ENCODE measurements at regions of chr2 and their contacts with region 1.

Region 1: DNA sequence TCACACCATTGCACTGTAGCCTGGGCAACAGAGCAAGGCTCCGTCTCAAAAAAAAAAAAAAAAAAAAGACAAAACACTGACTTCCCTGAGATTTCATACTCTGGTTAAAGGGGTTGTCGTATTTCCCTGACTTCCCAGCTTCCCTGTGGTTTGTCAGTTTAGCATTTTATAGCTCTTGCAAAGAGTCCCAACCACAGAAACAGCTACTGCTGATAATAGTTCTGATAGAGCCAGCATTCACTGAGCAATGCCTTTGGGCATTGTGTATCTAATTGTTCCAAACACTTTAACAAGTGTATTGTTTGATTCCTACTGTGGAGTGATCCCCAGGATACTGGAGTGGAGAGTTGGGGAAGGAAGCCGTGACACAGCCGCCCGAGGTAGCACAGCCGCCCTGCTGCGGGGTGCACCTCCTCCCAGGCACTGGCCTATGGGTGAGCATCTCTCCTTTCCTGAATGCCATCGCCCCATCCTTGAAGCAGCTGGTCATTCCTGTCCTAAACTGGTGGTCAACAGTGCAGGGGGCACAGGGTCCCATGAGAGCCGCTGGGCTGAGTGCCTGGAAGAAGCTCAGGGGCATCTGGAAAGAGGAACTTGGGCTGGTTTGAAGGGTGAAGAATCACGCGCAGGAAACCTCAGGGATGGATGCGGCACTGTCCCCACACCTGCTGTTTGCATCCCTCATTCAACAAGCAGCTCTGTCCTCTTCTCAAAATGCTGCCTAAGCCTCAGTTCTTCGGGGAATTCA is 81.0 kb upstream of the TMEM18 start:
- DNase-seq: no peak
- ATAC-seq: no peak

Region 2: GRCh38 chr2:784753-785152 is 26.5 kb after region 1 on chr2:
- intact Hi-C with region 1: loop called (anchors 1 kb)
- DNase-seq: no peak
- ATAC-seq: no peak

Region 3: DNA sequence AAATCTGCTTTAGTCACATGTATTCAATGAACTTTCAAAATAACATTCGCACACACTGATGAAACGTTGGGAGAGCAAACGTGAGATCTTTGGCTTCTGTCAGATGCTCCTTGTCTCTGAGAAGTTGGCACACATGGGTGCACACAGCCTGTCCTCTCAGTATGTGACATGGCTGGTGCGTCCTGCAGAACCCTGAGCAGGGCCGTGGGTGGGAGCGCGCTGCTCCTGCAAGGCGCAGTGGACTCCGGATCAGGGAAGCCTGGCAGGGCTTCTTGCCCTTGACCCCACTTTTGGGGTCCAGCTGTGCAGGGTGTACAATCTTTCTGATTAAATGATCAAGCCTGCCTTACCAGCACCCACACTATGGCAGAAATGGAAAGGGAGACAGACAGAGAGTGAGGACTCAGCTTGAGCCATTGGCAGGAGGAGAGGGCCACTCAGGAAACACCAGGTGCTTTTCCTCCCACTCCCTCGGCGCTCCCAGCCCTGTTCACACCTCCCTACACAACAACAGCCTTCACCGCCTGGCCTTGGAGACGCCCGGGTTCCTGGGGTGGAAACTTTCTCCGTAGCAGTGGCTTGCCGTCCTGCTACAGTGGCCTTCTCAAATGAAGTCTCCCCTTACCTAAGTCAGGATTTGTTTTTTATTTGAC is 84.0 kb after region 1 on chr2:
- intact Hi-C with region 1: no loop called
- DNase-seq: no peak
- ATAC-seq: no peak

Measured in sciatic nerve (tissue), 2 donors.